Activated B cell treated with CpG ODN at 0.5 μM for 24 hours (primary cell): ENCODE measurements at regions of chr9 and their contacts with region 1.

Region 1: DNA sequence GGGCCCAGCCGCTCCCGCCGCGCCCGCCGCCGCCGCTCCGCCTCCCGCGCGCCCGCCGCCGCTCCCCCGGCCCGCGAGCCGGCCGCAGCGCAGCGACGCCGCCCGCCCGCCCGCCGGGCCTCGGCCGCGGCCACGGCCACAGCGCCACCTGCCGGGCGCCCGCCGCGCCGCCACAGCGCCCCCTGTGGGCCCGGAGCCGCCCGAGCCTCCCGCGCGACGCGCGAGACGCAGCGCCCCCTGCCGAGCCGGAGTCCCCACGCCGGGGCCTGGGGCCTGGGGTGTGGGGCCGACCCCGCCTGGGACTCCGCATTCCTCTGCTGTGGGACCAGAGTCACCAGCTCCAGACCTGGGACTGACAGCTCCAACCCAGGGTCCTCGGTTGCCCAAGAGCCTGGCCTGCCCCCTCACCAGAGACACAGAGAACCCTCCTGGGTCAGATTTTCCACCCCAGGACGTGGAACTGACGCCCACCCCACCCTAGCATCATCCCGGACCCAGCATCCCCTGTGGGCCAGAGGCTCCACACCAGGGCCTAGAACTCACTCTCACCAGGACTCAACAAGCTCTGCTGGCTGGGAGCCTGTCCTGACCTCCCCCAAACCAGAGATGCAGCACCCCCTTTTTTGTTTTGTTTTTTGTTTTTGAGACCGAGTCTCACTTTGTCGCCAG is at the start of gene RAPGEF1:
- DNase-seq: peak; percentile 97
- ATAC-seq: peak; percentile 67
- H3K4me3 Mint-ChIP-seq: peak within 1 kb of the TSS; percentile 93
- H3K27ac Mint-ChIP-seq: peak within 1 kb of the TSS; percentile 78
- H3K4me1 Mint-ChIP-seq: peaks cover 62% of the 10 kb centered on the region
- H3K27me3 Mint-ChIP-seq: no peaks in the 10 kb centered on the region
- CTCF ChIP-seq: peak; percentile 52
- total RNA-seq, gene RAPGEF1: 278 and 318 TPM in 2 replicates

Region 2: GRCh38 chr9:131621551-131622358 is 118.4 kb before region 1 on chr9:
- CTCF ChIA-PET with region 1: interaction called, 22 read pairs
- POLR2A ChIA-PET with region 1: interaction called, 567 read pairs
- intact Hi-C with region 1: no loop called
- DNase-seq: peak; percentile 39
- ATAC-seq: peak; percentile 79
- H3K4me3 Mint-ChIP-seq: peak overlapping the region; percentile 74
- H3K27ac Mint-ChIP-seq: peak overlapping the region; percentile 88
- H3K4me1 Mint-ChIP-seq: peaks cover 47% of the 10 kb centered on the region
- H3K27me3 Mint-ChIP-seq: no peaks in the 10 kb centered on the region
- CTCF ChIP-seq: no peak

Region 3: DNA sequence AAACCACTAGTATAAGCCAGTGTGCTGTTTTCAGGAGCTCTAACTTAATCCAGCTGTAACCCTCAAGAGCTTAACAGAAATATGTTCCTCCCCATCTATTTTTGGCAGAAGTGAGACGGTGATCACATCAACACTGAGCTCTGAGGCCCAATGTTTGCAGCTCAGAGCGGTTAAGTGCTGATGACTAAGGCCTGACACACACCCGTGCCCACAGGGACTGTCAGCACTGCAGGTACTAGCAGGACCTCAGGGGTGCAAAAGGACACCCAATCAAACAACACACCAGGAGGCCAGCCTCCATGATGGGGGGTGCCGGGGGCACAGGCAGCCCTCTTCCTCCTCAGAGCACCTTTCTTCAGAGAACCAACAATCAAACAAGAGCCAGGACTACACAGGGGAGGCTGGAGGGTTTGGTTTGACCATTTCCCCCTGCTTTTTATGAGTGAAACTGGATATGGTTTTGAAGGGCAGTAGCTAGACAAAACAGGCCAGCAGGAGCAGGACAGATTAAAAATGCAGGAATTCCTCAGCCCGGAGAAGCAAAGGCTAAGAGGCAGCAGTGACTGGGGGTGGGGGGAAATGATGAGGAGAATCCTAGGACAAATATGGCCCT is 61.5 kb before region 1 on chr9:
- CTCF ChIA-PET with region 1: interaction called, 11 read pairs
- POLR2A ChIA-PET with region 1: interaction called, 683 read pairs
- intact Hi-C with region 1: no loop called
- DNase-seq: peak; percentile 63
- ATAC-seq: peak; percentile 90
- H3K4me3 Mint-ChIP-seq: peak overlapping the region; percentile 93
- H3K27ac Mint-ChIP-seq: peak overlapping the region; percentile 93
- H3K4me1 Mint-ChIP-seq: peaks cover 98% of the 10 kb centered on the region
- H3K27me3 Mint-ChIP-seq: no peaks in the 10 kb centered on the region
- CTCF ChIP-seq: no peak

Region 4: DNA sequence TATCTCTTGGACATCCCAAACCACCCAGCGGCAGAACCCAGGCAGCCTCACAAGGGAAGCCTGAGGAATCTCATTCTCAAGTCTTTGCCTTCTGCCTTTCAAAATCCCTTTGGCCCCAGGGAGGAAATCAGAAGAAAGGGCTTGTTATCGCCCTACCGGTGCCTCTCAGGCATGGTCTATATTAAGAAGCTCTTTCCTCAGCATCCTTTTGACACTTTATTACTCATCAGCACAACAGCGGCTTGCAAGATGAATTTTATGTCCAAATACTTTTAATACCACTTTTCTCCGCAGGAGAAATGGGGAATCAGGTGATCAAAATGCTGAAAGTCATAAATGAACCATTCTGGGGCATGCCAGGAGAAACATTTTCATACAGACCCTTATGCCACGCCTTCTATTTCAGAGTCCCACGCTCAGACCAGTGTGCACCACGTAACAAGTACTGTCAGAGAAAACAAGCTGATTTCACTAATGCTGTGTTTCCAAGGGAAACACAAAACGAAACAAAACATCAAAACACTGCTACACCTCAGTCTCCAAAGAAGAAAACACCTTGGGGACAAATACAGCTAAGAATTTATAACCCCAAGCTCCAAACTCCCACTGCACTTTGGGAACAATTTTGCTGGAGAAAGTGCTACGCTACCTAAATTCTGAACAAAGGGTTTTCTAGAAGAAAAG is 30.2 kb before region 1 on chr9:
- CTCF ChIA-PET with region 1: interaction called, 5 read pairs
- POLR2A ChIA-PET with region 1: interaction called, 14 read pairs
- intact Hi-C with region 1: loop called (anchors 2 kb)
- DNase-seq: no peak
- ATAC-seq: peak; percentile 49
- H3K4me3 Mint-ChIP-seq: peak overlapping the region; percentile 44
- H3K27ac Mint-ChIP-seq: peak overlapping the region; percentile 70
- H3K4me1 Mint-ChIP-seq: peaks cover 92% of the 10 kb centered on the region
- H3K27me3 Mint-ChIP-seq: no peaks in the 10 kb centered on the region
- CTCF ChIP-seq: no peak